Psoas muscle (tissue), 8 donors: ENCODE measurements at regions of chr11 and their contacts with region 1.

Region 1: DNA sequence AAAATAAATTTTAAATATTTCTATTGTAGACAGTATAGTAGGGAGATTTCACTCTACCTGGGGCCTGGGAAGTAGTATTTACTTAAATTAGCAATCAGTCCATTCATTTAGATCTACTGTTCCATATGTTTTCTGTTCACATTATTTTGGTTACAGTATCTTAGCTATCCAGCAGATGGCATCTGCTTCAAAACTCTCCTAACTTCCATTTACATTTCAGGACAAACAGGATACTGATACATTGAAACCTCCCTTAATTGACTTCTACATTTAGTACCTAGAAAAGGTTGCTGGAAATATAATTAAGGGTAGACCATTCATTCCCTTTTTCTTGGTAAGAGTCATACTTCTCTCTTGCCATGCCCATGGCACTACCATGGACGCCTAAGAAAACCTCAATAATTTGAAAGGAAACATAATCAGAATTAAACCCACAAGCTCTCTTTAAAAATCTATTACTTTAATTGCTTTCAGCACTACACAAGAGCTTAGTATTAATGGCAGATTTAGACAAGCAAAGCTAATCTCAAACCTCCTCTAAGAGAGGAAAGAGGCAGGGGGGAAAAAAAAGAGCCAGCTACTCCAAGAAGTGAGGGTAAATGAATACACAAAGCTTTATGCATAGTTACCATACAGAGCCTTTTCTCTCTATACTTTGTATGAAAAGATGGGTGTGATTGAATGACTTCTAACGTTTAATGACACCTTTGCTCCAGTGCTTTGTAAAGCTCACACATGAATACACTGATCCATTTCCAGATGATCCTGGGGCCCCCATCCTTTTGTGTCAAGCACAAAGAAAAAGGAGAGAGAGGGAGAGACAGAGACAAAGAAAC is 131.2 kb upstream of the MTMR2 start:
- DNase-seq: no peak
- ATAC-seq: no peak
- H3K4me3 ChIP-seq: no peak overlapping the region
- H3K27ac ChIP-seq: no peak overlapping the region
- H3K4me1 ChIP-seq: no peaks in the 10 kb centered on the region
- H3K27me3 ChIP-seq: no peaks in the 10 kb centered on the region
- CTCF ChIP-seq: peak; percentile 56

Region 2: GRCh38 chr11:96038046-96038445 is 17.0 kb before region 1 on chr11:
- intact Hi-C with region 1: no loop called
- DNase-seq: no peak
- ATAC-seq: no peak
- H3K4me3 ChIP-seq: no peak overlapping the region
- H3K27ac ChIP-seq: no peak overlapping the region
- H3K4me1 ChIP-seq: peaks cover 7% of the 10 kb centered on the region
- H3K27me3 ChIP-seq: no peaks in the 10 kb centered on the region
- CTCF ChIP-seq: no peak

Region 3: GRCh38 chr11:96342961-96343711 is 288.0 kb after region 1 on chr11 and contains the start of gene MAML2:
- intact Hi-C with region 1: loop called (anchors 2 kb)
- DNase-seq: peak; percentile 92 to 94
- ATAC-seq: peak; percentile 97 to 99 (median 98)
- H3K4me3 ChIP-seq: peak within 1 kb of the TSS; percentile 82
- H3K27ac ChIP-seq: peak within 1 kb of the TSS; percentile 57
- H3K4me1 ChIP-seq: peaks cover 10% of the 10 kb centered on the region
- H3K27me3 ChIP-seq: no peaks in the 10 kb centered on the region
- CTCF ChIP-seq: peak; percentile 92
- total RNA-seq, gene MAML2: 1.5 to 3.7 (median 2.1) TPM

Region 4: DNA sequence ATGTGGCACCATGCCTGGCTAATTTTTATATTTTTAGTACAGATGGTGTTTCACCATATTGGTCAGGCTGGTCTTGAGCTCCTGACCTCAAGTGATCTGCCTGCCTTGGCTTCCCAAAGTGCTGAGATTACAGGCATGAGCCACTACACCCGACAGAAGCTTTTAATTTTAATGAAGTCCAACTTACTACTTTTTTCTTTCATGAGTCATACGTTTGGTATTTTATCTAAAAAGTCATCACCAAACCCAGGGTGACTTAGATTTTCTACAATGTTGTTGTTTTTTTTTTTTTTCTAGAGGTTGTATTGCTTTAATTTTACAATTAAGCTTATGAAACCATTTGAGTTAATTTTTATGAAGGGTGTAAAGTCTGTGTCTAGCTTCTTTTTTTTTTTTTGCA is 369.6 kb after region 1 on chr11:
- intact Hi-C with region 1: loop called in 1 of 2 experiments (anchors 2 kb)
- DNase-seq: no peak
- ATAC-seq: no peak
- H3K4me3 ChIP-seq: no peak overlapping the region
- H3K27ac ChIP-seq: no peak overlapping the region
- H3K4me1 ChIP-seq: no peaks in the 10 kb centered on the region
- H3K27me3 ChIP-seq: peaks cover 0 to 4% (median 4%) of the 10 kb centered on the region in 3 donors
- CTCF ChIP-seq: no peak